SK-N-SH (cell line): ENCODE measurements at regions of chr14 and their contacts with region 1.

Region 1: DNA sequence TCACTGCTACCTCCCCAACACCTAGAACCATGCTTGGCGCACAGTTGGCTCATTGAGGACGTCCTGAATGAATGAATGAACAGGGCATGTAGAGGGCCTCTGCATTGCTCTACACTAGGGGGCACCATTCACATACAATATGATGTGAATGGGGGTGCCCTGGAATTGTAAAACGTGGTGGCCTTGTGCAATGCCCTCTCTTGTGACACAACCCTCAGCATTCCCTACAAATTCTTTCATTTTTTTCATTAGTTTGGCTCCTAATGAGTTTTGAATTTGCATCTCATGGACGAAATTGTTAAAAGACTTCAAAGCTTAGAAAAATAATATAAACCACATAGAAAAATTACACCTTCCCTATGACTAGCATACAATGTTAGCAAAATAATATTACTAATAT is 2.3 kb upstream of the DIO2 start:
- DNase-seq: peak; percentile 25
- H3K4me3 ChIP-seq: no peak overlapping the region
- H3K27ac ChIP-seq: no peak overlapping the region
- H3K4me1 ChIP-seq: peaks cover 0 to 3% of the 10 kb centered on the region in 2 experiments; a peak in 2 of 4 replicates
- H3K27me3 ChIP-seq: no peaks in the 10 kb centered on the region
- CTCF ChIP-seq: peak; percentile 64
- EP300 ChIP-seq: no peak
- RAD21 ChIP-seq: peak; percentile 75

Region 2: DNA sequence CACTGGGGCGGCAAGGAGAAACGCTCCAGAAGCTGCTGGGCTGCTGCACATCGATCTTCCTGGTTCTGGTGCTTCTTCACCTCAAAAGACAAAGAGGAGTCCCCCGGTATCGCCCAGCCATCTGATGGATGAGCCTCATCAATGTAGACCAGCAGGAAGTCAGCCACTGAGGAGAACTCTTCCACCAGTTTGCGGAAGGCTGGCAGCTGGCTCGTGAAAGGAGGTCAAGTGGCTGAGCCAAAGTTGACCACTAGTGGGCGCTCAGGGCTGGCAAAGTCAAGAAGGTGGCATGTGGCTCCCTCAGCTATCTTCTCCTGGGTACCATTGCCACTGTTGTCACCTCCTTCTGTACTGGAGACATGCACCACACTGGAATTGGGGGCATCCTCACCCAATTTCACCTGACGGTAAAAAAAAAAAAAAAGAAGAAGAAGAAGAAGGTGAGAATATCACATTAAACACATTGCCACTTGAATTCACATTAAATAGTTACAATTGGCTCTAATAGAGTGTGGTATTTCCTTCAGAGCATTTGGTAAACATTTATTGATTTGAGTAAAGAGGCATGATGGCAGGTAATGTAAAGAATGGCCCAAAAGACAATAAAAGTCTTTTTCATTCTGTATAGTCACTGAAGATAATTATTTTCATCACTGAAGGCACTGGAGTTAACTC is 10.6 kb before region 1 on chr14:
- CTCF ChIA-PET with region 1: interaction called, 15 read pairs
- POLR2A ChIA-PET with region 1: no interaction called
- DNase-seq: peak; percentile 20
- H3K4me3 ChIP-seq: no peak overlapping the region
- H3K27ac ChIP-seq: no peak overlapping the region
- H3K4me1 ChIP-seq: no peaks in the 10 kb centered on the region
- H3K27me3 ChIP-seq: no peaks in the 10 kb centered on the region
- CTCF ChIP-seq: peak; percentile 50
- EP300 ChIP-seq: no peak
- RAD21 ChIP-seq: peak; percentile 53

Region 3: GRCh38 chr14:80850197-80850814 is 636.7 kb after region 1 on chr14:
- CTCF ChIA-PET with region 1: interaction called, 12 read pairs
- POLR2A ChIA-PET with region 1: no interaction called
- DNase-seq: peak; percentile 5
- H3K4me3 ChIP-seq: no peak overlapping the region
- H3K27ac ChIP-seq: no peak overlapping the region
- H3K4me1 ChIP-seq: no peaks in the 10 kb centered on the region
- H3K27me3 ChIP-seq: no peaks in the 10 kb centered on the region
- CTCF ChIP-seq: peak; percentile 77
- EP300 ChIP-seq: no peak
- RAD21 ChIP-seq: peak; percentile 77